ENCODE measurements at regions of chr6 and their contacts with region 1.

Region 1: GRCh38 chr6:139219271-139219729 is 72.5 kb downstream of the TXLNB start:
- DNase-seq: peak; percentile 54 to 70 (median 68)
- H3K4me3 ChIP-seq: no peak overlapping the region
- H3K4me3 Mint-ChIP-seq: peak overlapping the region in 6 of 8 donors; percentile 23 to 80 (median 74)
- H3K27ac ChIP-seq: no peak overlapping the region
- H3K27ac Mint-ChIP-seq: peak overlapping the region; percentile 33 to 94 (median 87)
- H3K4me1 ChIP-seq: peaks cover 14% of the 10 kb centered on the region
- H3K4me1 Mint-ChIP-seq: peaks cover 8 to 13% (median 11%) of the 10 kb centered on the region in 4 donors
- H3K27me3 ChIP-seq: no peaks in the 10 kb centered on the region
- H3K27me3 Mint-ChIP-seq: no peaks in the 10 kb centered on the region

Region 2: DNA sequence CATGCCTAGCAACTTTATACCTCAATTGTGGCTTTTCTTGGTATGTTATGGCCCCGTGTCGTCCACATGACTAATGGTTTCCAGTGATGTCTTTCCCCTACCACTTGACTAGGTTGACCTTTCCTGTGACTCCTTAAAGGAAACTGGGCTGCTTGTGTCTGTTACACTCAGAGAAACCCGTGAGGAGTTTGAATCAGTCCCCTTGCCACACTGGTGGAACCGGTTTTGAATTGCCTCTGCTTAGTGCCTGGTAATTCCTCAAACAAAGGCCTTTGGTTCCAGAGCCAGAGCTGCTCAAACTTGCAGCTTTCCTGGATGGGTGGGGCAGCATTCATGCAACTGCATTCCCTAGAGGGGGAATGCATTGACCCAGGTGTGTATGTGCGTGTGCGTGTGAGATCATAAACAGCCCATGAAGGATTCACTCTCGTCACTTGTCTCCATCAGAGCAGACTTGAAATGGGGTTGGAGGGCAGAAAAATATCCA is 401.4 kb before region 1 on chr6:
- CTCF ChIA-PET with region 1: interaction called, 17 read pairs
- POLR2A ChIA-PET with region 1: no interaction called
- intact Hi-C with region 1: loop called (anchors 1 kb)
- DNase-seq: no peak
- H3K4me3 ChIP-seq: no peak overlapping the region
- H3K4me3 Mint-ChIP-seq: no peak overlapping the region
- H3K27ac ChIP-seq: no peak overlapping the region
- H3K27ac Mint-ChIP-seq: peak overlapping the region in 1 of 7 donors; percentile 55
- H3K4me1 ChIP-seq: no peaks in the 10 kb centered on the region
- H3K4me1 Mint-ChIP-seq: peaks cover 3 to 10% (median 7%) of the 10 kb centered on the region in 4 donors
- H3K27me3 ChIP-seq: no peaks in the 10 kb centered on the region
- H3K27me3 Mint-ChIP-seq: peaks cover 0 to 2% of the 10 kb centered on the region in 2 donors

Region 3: GRCh38 chr6:139134817-139135581 is 84.3 kb before region 1 on chr6 and contains the start of gene HECA:
- CTCF ChIA-PET with region 1: interaction called, 20 read pairs
- POLR2A ChIA-PET with region 1: interaction called, 4 read pairs
- intact Hi-C with region 1: no loop called
- DNase-seq: peak; percentile 98 to 100 (median 99)
- H3K4me3 ChIP-seq: peak within 1 kb of the TSS; percentile 75 to 95
- H3K4me3 Mint-ChIP-seq: peak within 1 kb of the TSS; percentile 90 to 98 (median 95)
- H3K27ac ChIP-seq: peak within 1 kb of the TSS; percentile 97
- H3K27ac Mint-ChIP-seq: peak within 1 kb of the TSS; percentile 98 to 100 (median 99)
- H3K4me1 ChIP-seq: peaks cover 60% of the 10 kb centered on the region
- H3K4me1 Mint-ChIP-seq: peaks cover 48 to 84% (median 57%) of the 10 kb centered on the region in 4 donors
- H3K27me3 ChIP-seq: no peaks in the 10 kb centered on the region
- H3K27me3 Mint-ChIP-seq: no peaks in the 10 kb centered on the region
- total RNA-seq, gene HECA: 154 to 161 TPM

Region 4: DNA sequence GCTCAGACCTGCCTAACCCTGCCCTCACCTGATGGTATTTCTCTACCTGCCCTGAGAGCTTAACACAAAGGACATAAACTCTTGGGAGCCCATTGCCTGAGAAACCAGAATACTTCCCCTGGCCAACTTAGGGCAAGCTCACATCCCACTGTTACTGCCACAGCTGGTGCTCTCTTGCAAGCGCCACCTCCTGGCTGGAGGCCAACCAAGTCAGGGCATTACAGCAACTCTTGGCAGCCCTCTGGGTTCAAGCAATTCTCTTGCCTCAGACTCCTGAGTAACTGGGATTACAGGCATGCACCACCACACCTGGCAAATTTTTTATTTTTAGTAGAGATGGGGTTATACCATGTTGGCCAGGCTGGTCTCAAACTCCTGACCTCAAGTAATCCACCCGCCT is 14.3 kb before region 1 on chr6:
- CTCF ChIA-PET with region 1: interaction called, 19 read pairs
- POLR2A ChIA-PET with region 1: no interaction called
- intact Hi-C with region 1: no loop called
- DNase-seq: no peak
- H3K4me3 ChIP-seq: no peak overlapping the region
- H3K4me3 Mint-ChIP-seq: no peak overlapping the region
- H3K27ac ChIP-seq: no peak overlapping the region
- H3K27ac Mint-ChIP-seq: no peak overlapping the region
- H3K4me1 ChIP-seq: peaks cover 2% of the 10 kb centered on the region
- H3K4me1 Mint-ChIP-seq: peaks cover 0 to 18% (median 9%) of the 10 kb centered on the region in 4 donors
- H3K27me3 ChIP-seq: no peaks in the 10 kb centered on the region
- H3K27me3 Mint-ChIP-seq: peaks cover 0 to 2% of the 10 kb centered on the region in 2 donors

Region 5: DNA sequence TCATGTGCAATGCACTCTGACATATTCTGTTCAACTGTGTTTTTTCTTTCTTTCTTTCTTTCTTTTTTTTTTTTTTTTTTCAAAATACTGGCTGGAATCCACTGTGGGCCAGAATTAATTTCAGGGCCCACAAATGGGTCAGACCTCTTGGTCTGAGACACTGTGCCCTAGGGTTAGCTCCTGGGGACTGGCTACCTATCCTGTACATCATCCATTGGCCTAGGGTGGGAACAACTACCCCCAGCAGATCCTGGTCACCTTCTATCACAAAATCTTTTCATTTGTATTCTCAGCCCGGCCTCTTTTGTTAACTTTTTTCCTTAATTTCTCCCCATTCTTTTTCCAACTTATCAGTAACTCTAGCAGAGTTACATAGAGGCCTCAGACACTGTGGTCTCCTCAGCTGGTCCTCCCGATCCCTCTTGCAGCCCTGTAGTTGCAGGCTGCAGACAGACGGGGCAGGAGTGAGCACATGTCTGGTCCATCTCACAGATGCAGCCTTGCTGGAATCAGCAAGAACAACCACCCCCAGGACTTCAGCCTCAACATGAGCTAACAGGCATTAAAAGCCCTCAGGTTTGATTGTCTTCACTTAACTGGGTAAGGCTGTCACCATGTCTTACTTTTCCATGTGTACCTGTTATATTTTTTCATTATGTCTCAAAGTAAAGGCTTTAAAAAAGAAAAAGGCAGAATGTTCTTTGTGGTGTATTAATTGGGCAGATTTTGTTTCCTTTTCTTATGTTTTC is 31.2 kb after region 1 on chr6:
- CTCF ChIA-PET with region 1: interaction called, 41 read pairs
- POLR2A ChIA-PET with region 1: interaction called, 6 read pairs
- intact Hi-C with region 1: loop called (anchors 2 kb)
- DNase-seq: peak; percentile 55 to 62 (median 60)
- H3K4me3 ChIP-seq: peak overlapping the region in 1 of 2 donors; percentile 1
- H3K4me3 Mint-ChIP-seq: peak overlapping the region; percentile 16 to 90 (median 69)
- H3K27ac ChIP-seq: peak overlapping the region; percentile 40
- H3K27ac Mint-ChIP-seq: peak overlapping the region; percentile 80 to 99 (median 92)
- H3K4me1 ChIP-seq: peaks cover 45% of the 10 kb centered on the region
- H3K4me1 Mint-ChIP-seq: peaks cover 40 to 51% (median 44%) of the 10 kb centered on the region in 4 donors
- H3K27me3 ChIP-seq: no peaks in the 10 kb centered on the region
- H3K27me3 Mint-ChIP-seq: no peaks in the 10 kb centered on the region

Region 6: GRCh38 chr6:139291813-139292619 is 72.7 kb after region 1 on chr6 and contains the start of gene TXLNB:
- CTCF ChIA-PET with region 1: interaction called, 54 read pairs
- POLR2A ChIA-PET with region 1: interaction called, 47 read pairs
- intact Hi-C with region 1: loop called (anchors 1 kb)
- DNase-seq: peak; percentile 81 to 95 (median 89)
- H3K4me3 ChIP-seq: peak within 1 kb of the TSS; percentile 26 to 42
- H3K4me3 Mint-ChIP-seq: peak within 1 kb of the TSS; percentile 79 to 91 (median 85)
- H3K27ac ChIP-seq: peak within 1 kb of the TSS; percentile 59
- H3K27ac Mint-ChIP-seq: peak within 1 kb of the TSS; percentile 94 to 99 (median 97)
- H3K4me1 ChIP-seq: peaks cover 59% of the 10 kb centered on the region
- H3K4me1 Mint-ChIP-seq: peaks cover 44 to 76% (median 58%) of the 10 kb centered on the region in 4 donors
- H3K27me3 ChIP-seq: no peaks in the 10 kb centered on the region
- H3K27me3 Mint-ChIP-seq: no peaks in the 10 kb centered on the region
- total RNA-seq, gene TXLNB: 1.4 to 1.6 TPM

Region 7: DNA sequence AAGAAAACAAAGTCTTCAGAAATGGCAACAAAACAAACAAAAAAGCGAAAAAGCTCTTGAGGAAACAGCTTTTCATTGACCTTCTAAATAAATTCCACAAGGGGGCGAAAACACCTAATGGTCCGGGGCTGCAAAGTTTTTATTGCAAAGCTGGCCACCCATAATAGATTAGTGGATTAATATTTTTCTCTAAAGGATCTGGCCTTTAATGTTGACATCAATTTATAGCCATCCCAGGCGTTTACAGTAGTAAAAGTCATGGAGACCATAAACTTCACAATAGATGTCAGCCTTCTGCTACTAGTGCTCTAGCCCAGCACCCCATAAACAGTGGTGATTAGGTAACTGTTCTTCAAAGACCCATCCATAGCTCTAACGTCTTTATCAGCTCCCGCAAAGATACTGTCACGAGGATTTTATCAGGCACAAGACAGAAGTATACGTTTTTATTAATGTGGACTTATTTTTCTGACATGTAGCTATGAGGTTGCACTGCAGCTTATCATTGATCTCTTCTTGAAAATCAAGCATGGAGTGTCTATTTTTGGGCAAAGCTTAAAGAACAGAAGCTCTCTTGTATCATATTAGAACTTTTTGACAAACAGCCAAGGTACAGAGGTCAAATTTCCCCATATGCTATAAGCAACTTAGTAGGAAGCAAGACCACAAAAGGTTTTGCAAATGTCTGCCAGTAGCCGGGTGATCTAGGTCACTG is 150.4 kb after region 1 on chr6:
- CTCF ChIA-PET with region 1: interaction called, 238 read pairs
- POLR2A ChIA-PET with region 1: interaction called, 45 read pairs
- intact Hi-C with region 1: loop called (anchors 1 kb)
- DNase-seq: peak; percentile 36 to 54 (median 48)
- H3K4me3 ChIP-seq: no peak overlapping the region
- H3K4me3 Mint-ChIP-seq: peak overlapping the region; percentile 60 to 100 (median 84)
- H3K27ac ChIP-seq: peak overlapping the region; percentile 40
- H3K27ac Mint-ChIP-seq: peak overlapping the region; percentile 80 to 99 (median 88)
- H3K4me1 ChIP-seq: peaks cover 40% of the 10 kb centered on the region
- H3K4me1 Mint-ChIP-seq: peaks cover 29 to 62% (median 36%) of the 10 kb centered on the region in 4 donors
- H3K27me3 ChIP-seq: no peaks in the 10 kb centered on the region
- H3K27me3 Mint-ChIP-seq: no peaks in the 10 kb centered on the region

Region 8: GRCh38 chr6:141026504-141026903 is 1807.2 kb after region 1 on chr6:
- CTCF ChIA-PET with region 1: no interaction called
- POLR2A ChIA-PET with region 1: no interaction called
- intact Hi-C with region 1: no loop called
- DNase-seq: no peak
- H3K4me3 ChIP-seq: no peak overlapping the region
- H3K4me3 Mint-ChIP-seq: no peak overlapping the region
- H3K27ac ChIP-seq: no peak overlapping the region
- H3K27ac Mint-ChIP-seq: no peak overlapping the region
- H3K4me1 ChIP-seq: no peaks in the 10 kb centered on the region
- H3K4me1 Mint-ChIP-seq: no peaks in the 10 kb centered on the region
- H3K27me3 ChIP-seq: no peaks in the 10 kb centered on the region
- H3K27me3 Mint-ChIP-seq: no peaks in the 10 kb centered on the region

Measured in CD4-positive, alpha-beta memory T cell (primary cell).